ENCODE measurements at regions of chr17 and their contacts with region 1.

Region 1: DNA sequence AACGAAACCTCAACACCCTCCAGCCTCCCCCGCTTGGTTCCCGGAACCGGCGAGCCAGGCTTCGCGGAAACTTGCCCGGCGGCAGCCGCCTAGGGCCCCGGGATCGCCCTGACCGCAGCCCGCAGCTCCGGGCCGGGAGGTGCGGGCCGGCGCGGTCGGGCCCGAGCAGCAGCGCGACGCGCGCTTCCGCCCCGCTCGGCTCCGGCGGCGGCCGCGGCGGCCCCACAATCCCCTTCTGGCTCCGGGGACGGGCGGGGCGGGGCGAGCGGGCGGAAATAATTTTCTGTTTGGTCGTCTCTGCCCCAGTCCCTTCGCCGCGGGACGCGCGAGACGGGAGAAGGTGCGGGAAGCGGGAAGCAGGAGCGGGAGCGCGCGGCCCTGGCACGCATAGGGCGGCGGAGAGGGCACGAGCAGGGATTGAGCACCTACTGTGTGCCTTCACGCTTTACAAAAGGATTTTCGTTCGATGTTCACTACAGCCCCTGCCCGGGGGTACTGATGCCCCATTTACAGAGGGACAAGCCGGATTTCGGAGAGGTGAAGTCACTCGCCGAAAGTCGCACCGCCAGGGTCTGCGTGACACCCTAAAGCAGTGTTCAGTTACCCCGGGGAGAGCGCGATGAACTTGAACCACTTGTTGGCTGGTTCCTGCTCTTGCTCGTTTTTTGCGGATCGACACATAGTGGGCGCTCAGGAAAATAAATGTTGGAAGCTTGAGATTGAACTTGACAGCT is 2.7 kb upstream of the MLLT6 start:
- DNase-seq: peak; percentile 92
- ATAC-seq: peak; percentile 10
- H3K4me3 Mint-ChIP-seq: peak overlapping the region; percentile 95
- H3K27ac Mint-ChIP-seq: peak overlapping the region; percentile 100
- H3K4me1 Mint-ChIP-seq: peaks cover 48% of the 10 kb centered on the region
- H3K27me3 Mint-ChIP-seq: no peaks in the 10 kb centered on the region

Region 2: GRCh38 chr17:38557836-38558727 is 144.3 kb before region 1 on chr17:
- CTCF ChIA-PET with region 1: interaction called, 3 read pairs
- POLR2A ChIA-PET with region 1: no interaction called
- intact Hi-C with region 1: loop called in 1 of 2 experiments (anchors 1 kb)
- DNase-seq: peak; percentile 95
- ATAC-seq: peak; percentile 85
- H3K4me3 Mint-ChIP-seq: peak overlapping the region; percentile 73
- H3K27ac Mint-ChIP-seq: no peak overlapping the region
- H3K4me1 Mint-ChIP-seq: peaks cover 22% of the 10 kb centered on the region
- H3K27me3 Mint-ChIP-seq: peaks cover 23% of the 10 kb centered on the region

Region 3: DNA sequence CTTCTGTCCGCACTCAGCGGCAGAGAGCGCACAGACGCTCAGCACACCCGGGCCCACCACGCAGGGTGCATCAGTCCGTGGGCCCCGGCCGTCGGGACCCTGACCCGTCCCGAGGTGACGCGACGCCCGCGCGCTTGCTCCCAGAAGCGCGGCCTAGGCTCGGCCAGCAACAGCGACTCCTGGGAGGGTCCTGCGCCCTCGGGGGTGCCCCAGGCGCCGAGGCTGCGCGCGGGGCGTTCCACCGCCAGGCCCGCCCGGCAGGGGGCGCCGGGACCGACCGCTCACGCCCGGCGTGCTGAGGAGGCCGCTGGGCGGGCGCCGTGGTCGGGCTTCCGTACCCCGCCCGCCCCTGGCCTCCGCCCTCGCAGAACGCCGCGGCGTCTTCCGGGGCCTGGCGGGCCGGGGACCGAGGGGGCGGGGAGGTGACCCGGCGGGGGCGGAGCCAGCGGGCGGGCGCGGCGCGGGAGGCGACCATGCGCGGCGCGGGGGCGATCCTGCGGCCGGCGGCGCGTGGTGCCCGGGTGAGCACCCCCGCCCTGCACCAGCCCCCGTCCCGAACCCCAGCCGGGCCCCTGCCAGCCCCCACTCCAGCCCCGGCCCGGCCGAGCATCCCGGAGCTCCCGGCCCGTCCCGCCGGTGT is 27.7 kb after region 1 on chr17 and contains the start of gene CISD3:
- CTCF ChIA-PET with region 1: interaction called, 16 read pairs
- POLR2A ChIA-PET with region 1: interaction called, 7 read pairs
- intact Hi-C with region 1: loop called (anchors 1 kb)
- DNase-seq: peak; percentile 92
- ATAC-seq: peak; percentile 66
- H3K4me3 Mint-ChIP-seq: peak within 1 kb of the TSS; percentile 91
- H3K27ac Mint-ChIP-seq: peak within 1 kb of the TSS; percentile 100
- H3K4me1 Mint-ChIP-seq: peaks cover 81% of the 10 kb centered on the region
- H3K27me3 Mint-ChIP-seq: no peaks in the 10 kb centered on the region
- total RNA-seq, gene CISD3: 49.4 to 58.6 TPM

Region 4: DNA sequence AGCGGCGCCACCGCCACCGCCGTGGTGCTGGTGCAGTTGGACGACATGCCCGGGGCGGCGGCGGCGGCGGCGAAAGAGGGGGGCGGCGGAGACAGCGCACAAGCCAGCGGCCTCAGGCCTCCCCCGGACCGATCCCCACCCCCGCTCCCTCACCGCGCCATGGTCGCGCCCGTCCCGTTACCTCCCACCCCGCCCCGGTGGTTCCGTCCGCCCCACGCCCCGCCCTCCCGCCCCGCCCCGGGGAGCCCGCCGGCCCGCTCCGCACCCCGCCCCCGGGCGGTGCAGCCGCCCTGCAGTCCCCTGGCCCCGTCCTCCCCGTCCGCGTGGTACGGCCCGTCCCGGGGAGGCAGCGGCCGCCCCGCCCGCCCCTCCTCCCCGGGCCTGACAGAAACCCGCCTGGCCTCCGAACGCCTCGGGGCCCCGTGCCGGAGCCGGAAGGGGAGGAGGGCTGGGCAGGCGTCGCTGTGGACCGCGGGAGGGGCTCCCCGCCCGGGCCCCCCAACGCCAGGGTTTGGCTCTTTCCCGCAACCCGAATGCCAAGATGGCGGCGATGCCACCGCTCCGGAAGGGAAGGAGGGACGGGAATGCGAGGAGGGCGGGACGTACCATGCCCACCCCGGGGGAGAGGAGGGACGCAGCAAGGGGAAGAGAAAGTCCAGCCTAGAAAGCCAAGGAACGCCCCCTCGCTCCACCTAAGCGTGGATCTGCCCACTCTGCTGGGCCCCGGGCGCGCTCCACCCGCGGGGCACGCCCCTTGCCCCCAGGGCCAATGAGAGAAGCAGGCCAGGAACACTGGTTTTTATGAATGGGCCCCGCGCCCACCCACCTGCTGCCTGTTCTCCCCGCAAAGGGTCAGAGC is 97.3 kb after region 1 on chr17 and contains the start of gene PIP4K2B:
- CTCF ChIA-PET with region 1: interaction called, 4 read pairs
- POLR2A ChIA-PET with region 1: no interaction called
- intact Hi-C with region 1: loop called in 1 of 2 experiments (anchors 1 kb)
- DNase-seq: peak; percentile 93
- ATAC-seq: peak; percentile 83
- H3K4me3 Mint-ChIP-seq: peak within 1 kb of the TSS; percentile 99
- H3K27ac Mint-ChIP-seq: peak within 1 kb of the TSS; percentile 94
- H3K4me1 Mint-ChIP-seq: peaks cover 33% of the 10 kb centered on the region
- H3K27me3 Mint-ChIP-seq: no peaks in the 10 kb centered on the region
- total RNA-seq, gene PIP4K2B: 36.3 to 41.6 TPM

Region 5: DNA sequence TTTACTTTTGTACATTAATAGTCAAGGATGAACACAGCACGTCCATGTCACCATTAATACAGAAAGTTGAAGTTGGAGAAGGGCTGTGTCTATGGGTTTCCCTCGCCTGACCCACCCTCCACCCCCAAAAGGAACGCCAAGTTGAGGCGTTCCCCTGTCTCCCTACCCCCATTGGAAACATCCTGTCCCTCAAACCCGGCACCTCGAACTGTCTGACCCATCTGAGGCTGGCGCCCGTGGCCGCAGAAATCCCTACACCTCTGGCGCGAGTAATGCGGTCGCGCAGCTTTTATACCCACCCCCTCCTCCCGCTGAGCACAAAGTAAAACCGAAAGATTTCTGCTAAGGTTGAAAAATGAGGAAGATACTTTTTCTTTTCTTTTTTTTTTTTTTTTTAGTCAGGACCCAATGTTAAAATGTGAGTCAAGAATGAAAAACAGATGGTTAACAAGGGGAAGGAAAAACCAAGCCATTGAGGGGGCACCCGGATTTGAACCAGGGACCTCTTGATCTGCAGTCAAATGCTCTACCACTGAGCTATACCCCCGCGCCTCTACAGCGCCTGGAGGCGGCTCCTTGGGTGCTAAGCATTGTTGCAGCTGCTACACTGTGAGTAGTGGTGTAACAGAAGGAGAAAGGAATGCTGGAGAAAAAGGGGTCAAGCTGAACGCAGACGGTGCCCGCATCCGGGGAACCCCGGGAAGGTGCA is 166.6 kb after region 1 on chr17:
- CTCF ChIA-PET with region 1: no interaction called
- POLR2A ChIA-PET with region 1: interaction called, 3 read pairs
- intact Hi-C with region 1: loop called (anchors 1 to 2 kb)
- DNase-seq: peak; percentile 95
- ATAC-seq: peak; percentile 56
- H3K4me3 Mint-ChIP-seq: peak overlapping the region; percentile 93
- H3K27ac Mint-ChIP-seq: peak overlapping the region; percentile 93
- H3K4me1 Mint-ChIP-seq: peaks cover 44% of the 10 kb centered on the region
- H3K27me3 Mint-ChIP-seq: peaks cover 2% of the 10 kb centered on the region

Region 6: GRCh38 chr17:39401412-39402243 is 699.3 kb after region 1 on chr17 and contains the start of gene FBXL20:
- CTCF ChIA-PET with region 1: no interaction called
- POLR2A ChIA-PET with region 1: no interaction called
- intact Hi-C with region 1: loop called in 1 of 2 experiments (anchors 5 kb)
- DNase-seq: peak; percentile 97
- ATAC-seq: peak; percentile 63
- H3K4me3 Mint-ChIP-seq: peak within 1 kb of the TSS; percentile 91
- H3K27ac Mint-ChIP-seq: peak within 1 kb of the TSS; percentile 92
- H3K4me1 Mint-ChIP-seq: peaks cover 48% of the 10 kb centered on the region
- H3K27me3 Mint-ChIP-seq: no peaks in the 10 kb centered on the region
- total RNA-seq, gene FBXL20: 16.9 to 18.9 TPM

Region 7: DNA sequence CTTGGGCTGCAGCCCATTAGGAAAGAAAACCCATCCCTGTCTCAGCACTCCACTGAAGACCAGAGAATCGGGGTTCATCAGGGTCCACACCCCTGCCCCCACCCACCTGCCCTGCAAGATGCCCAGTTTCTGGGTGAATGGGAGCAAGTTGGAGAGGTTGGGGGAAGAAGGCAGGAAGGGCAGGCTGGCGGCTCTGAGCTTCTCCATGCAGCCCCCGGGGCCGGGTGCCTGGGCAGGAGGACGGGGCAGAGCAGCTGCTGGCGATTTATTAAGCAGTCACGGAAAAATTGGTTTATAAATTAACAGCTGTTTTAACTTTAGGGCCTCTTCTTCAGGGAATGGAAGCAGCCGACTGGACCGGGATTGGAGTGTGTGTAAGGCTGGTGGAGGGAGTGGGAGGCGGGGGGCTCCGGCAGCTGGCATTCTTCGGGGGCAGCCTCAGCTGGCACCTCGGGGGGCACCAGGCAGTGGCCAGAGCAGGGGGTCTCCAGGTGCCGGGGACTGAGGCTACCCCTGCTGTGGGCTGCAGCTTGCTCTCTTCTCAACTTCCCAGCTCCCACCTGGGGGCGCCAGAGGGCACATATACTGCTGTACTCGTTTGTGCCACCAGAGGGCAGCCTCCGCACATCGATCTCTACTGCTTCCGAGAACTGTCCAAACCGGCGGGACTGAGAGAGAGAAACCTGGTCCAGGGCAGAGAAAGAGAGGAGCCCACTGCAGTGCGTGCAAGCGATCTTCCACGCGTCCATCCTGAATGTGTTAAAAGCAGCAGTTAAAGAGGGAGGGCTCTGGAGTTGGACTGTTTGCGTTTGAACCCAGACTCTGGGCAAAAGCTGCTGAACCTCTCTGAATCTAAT is 919.4 kb after region 1 on chr17:
- CTCF ChIA-PET with region 1: no interaction called
- POLR2A ChIA-PET with region 1: no interaction called
- intact Hi-C with region 1: no loop called
- DNase-seq: peak; percentile 91
- ATAC-seq: peak; percentile 68
- H3K4me3 Mint-ChIP-seq: peak overlapping the region; percentile 62
- H3K27ac Mint-ChIP-seq: peak overlapping the region; percentile 91
- H3K4me1 Mint-ChIP-seq: peaks cover 26% of the 10 kb centered on the region
- H3K27me3 Mint-ChIP-seq: peaks cover 18% of the 10 kb centered on the region

Measured in activated CD4-positive, alpha-beta T cell treated with anti-CD3 and anti-CD28 coated beads for 36 hours (primary cell).